ENCODE measurements at regions of chr20 and their contacts with region 1.

Region 1: GRCh38 chr20:37369846-37370245 is 23.9 kb downstream of the SRC start:
- DNase-seq: no peak
- H3K4me3 ChIP-seq: no peak overlapping the region
- CTCF ChIP-seq: no peak

Region 2: DNA sequence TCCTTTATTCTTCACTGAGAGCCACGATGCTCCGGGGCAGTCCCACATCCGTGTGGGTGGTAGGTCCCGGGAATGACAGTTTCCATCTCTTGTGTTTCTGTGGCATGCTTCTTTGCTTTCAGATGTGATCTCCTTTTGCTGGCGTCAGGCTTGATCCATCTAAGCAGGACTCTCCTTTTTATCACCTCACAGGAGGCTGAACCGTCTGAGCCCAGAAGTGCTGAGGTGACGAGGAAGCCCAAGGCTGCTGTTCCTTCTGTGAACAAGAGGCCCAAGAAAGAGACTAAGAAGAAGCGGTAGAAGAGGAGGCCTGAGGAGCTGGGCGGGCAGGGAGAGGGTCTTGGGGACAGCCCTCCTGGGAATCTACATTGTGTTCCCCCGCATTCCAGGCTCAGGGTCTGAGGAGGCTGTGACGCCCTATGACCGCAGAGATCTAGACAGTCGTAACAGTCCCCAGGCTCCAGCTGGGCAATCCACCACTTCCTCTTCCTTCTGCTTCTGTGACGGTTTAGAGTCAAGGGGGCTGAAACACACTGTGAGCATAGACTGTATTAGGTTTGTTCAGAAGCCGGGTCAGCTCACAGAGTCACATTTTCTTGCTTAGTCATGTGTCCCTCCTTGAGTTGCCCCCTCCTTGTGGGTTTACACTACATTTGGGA is 53.6 kb before region 1 on chr20:
- in situ Hi-C with region 1: no loop called
- DNase-seq: no peak
- H3K4me3 ChIP-seq: no peak overlapping the region
- CTCF ChIP-seq: no peak

Region 3: GRCh38 chr20:37327748-37328147 is 42.1 kb before region 1 on chr20:
- in situ Hi-C with region 1: loop called (anchors 5 kb)
- DNase-seq: peak; percentile 32
- H3K4me3 ChIP-seq: no peak overlapping the region
- CTCF ChIP-seq: no peak

Region 4: DNA sequence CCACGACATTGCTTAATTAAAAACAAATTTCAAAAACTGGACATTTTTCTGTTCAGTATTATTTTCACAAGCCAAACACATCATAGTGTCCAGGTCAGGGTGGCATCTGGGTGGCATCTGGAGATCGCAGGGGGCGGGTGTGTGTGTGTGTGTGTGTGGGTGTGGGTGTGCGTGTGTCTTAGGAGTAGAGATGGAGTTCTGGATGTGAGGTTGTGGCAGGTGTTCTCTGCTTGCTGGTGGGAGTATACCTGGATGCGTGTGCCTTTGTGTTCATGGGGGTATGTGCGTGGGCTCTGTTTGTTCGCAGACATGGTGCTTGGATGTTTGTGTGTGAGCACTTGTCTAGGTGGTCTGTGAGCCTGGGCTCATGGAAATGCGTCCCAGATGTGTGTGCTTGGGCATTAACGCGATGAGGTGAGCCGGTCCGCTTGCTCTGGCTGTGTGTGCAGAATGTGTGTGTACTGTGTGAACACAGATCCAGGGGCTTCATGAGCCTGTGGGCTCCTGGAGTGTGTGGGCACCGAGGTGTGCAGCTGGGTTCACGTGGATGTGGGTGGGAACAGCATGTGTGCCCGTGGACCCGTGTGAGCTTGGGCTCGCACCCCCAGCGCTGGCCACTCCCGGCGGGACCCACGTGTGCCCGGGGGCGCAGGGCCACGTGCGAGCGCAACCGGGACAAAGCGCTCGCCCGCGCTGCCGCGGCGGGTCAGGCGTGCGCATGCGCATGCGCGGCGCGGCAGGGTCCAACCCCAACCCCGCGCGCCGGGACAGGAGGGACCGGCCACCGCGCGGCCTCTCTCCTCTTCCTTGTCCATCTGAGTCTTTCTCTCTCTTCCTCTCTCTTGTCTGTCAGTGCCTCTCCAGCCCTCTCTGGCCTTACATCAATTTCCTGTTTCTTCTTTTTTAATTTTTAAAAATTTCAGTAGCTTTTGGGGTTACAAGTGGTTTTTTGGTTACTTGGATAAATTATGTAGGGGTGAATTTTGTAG is 36.5 kb after region 1 on chr20:
- in situ Hi-C with region 1: no loop called
- DNase-seq: no peak
- H3K4me3 ChIP-seq: peak overlapping the region; percentile 26
- CTCF ChIP-seq: no peak

Region 5: DNA sequence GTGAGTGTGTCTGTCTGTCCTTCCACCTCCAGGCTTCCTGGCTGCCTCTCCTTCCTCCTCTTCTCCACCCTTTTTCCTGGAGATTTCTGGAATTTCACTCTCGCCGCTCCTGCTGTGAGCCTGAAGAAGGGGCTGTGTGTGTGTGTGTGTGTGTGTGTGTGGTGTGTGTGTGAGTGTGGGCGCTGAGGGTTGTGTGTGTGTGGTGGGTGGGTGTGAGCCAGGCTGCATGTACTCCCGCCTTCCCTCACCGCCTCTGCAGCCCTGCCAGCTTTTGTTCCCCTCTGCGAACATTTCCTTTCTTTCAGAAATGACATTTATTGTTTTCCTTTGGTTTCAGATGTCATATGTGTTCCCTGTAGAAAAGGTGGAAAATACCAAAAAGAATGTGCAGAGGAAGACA is 52.1 kb after region 1 on chr20:
- in situ Hi-C with region 1: no loop called
- DNase-seq: no peak
- H3K4me3 ChIP-seq: no peak overlapping the region
- CTCF ChIP-seq: no peak

Measured in astrocyte of the cerebellum (primary cell).